GM12878 (cell line): ENCODE measurements at regions of chr7 and their contacts with region 1.

Region 1: DNA sequence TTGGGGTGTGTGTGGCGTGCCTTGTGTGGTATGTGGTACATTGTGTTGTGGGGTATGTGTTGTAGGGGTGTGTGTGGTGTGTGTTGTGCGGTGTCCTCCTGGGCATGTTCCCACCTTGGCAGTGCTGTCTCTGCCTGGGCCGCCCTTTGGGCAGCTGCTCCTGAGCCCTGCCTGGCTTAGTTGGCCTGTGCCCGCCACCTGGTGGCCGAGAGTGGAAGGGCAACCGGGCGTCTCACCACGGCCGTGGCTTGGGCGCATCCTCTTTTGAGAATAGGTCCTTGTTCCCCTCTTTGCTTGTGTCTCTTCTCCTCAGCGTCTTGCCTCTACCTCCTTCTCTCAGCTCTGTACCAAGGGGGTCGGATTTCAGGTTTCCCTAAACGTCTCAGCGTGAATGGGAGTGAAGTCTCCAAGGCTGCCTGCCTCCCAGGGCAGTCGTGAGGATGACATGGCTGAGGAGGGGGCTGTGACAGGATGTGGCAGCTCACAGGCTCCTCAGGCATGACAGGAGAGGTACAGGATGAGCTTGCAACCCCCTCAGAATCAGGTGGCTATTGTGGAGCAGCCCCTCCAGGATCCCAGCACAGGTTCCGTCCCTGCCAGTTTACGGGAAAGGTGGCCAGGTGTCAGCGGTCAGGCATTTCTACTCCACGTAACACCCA is 98.4 kb upstream of the PODXL start:
- DNase-seq: peak; percentile 4
- ATAC-seq: peak; percentile 100
- H3K4me3 ChIP-seq: no peak overlapping the region
- H3K27ac ChIP-seq: no peak overlapping the region
- H3K4me1 ChIP-seq: no peaks in the 10 kb centered on the region
- H3K27me3 ChIP-seq: no peaks in the 10 kb centered on the region
- CTCF ChIP-seq: peak; percentile 84 to 96 (median 96)
- EP300 ChIP-seq: no peak
- POLR2A ChIP-seq: no peak
- RAD21 ChIP-seq: peak; percentile 92

Region 2: DNA sequence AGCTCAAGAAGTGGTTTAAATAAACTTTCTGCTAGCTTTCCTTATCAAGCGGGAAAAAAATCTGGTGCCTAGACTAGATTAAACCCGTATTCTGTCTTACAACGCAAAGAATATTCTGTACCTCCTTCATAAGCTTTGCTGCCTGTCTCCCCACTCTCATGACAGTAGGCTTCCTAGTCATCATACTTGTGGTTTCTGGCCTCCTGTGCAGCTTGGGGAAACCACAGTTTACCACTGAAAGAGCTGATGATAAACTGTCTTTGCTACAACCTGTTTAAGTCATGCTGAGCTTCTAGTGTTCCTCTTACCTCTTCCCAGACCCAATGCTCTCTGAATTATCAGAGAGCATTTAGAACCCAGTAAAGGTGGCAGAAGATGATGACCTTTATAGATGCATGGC is 153.4 kb before region 1 on chr7:
- CTCF ChIA-PET with region 1: interaction called, 11 read pairs
- POLR2A ChIA-PET with region 1: no interaction called
- RAD21 ChIA-PET with region 1: no interaction called
- SMC1A ChIA-PET with region 1: interaction called, 3 read pairs
- in situ Hi-C with region 1: no loop called
- intact Hi-C with region 1: no loop called
- DNase-seq: no peak
- ATAC-seq: peak; percentile 81
- H3K4me3 ChIP-seq: no peak overlapping the region
- H3K27ac ChIP-seq: no peak overlapping the region
- H3K4me1 ChIP-seq: peaks cover 6% of the 10 kb centered on the region; the same call in 1 of the 2 replicates
- H3K27me3 ChIP-seq: no peaks in the 10 kb centered on the region
- CTCF ChIP-seq: no peak
- EP300 ChIP-seq: no peak
- POLR2A ChIP-seq: no peak
- RAD21 ChIP-seq: no peak

Region 3: GRCh38 chr7:131507592-131508331 is 147.0 kb before region 1 on chr7:
- CTCF ChIA-PET with region 1: interaction called, 21 read pairs
- POLR2A ChIA-PET with region 1: no interaction called
- RAD21 ChIA-PET with region 1: interaction called, 8 read pairs
- SMC1A ChIA-PET with region 1: interaction called, 5 read pairs
- in situ Hi-C with region 1: loop called (anchors 5 kb)
- intact Hi-C with region 1: loop called (anchors 1 kb)
- DNase-seq: no peak
- ATAC-seq: peak; percentile 96
- H3K4me3 ChIP-seq: no peak overlapping the region
- H3K27ac ChIP-seq: no peak overlapping the region
- H3K4me1 ChIP-seq: no peaks in the 10 kb centered on the region
- H3K27me3 ChIP-seq: no peaks in the 10 kb centered on the region
- CTCF ChIP-seq: peak; percentile 91 to 95 (median 95)
- EP300 ChIP-seq: no peak
- POLR2A ChIP-seq: no peak
- RAD21 ChIP-seq: peak; percentile 66

Region 4: GRCh38 chr7:131513245-131514061 is 141.3 kb before region 1 on chr7:
- CTCF ChIA-PET with region 1: interaction called, 21 read pairs
- POLR2A ChIA-PET with region 1: no interaction called
- RAD21 ChIA-PET with region 1: interaction called, 8 read pairs
- SMC1A ChIA-PET with region 1: interaction called, 6 read pairs
- in situ Hi-C with region 1: loop called (anchors 5 kb)
- intact Hi-C with region 1: loop called (anchors 1 kb)
- DNase-seq: no peak
- ATAC-seq: peak; percentile 100
- H3K4me3 ChIP-seq: no peak overlapping the region
- H3K27ac ChIP-seq: no peak overlapping the region
- H3K4me1 ChIP-seq: no peaks in the 10 kb centered on the region
- H3K27me3 ChIP-seq: no peaks in the 10 kb centered on the region
- CTCF ChIP-seq: peak; percentile 93 to 97 (median 97); a peak in 5 of 6 replicates
- EP300 ChIP-seq: no peak
- POLR2A ChIP-seq: no peak
- RAD21 ChIP-seq: peak; percentile 72

Region 5: DNA sequence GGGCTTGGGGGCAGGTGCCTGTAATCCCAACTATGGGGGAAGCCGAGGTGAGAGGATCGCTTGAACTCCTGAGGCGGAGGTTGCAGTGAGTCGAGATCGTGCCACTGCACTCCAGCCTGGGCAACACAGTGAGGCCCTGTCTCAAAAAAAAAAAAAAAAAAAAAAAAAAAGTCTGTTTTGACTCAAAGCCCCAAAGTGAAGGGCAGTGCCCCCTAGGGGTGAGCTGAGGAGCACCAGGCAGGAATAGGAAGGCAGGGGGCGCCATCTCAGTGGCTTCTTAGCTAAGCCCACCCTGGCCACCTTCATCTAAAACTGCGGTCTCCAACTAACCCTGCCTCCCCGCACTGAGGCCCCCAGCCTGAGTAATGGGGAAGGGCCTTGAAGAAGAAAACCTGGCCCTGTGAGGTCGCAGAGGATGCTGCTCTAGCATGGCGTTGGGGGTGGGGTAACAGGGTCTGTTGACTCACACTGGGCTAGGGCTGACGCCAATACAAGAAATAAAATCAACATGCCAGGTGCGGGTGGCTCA is 108.2 kb before region 1 on chr7:
- CTCF ChIA-PET with region 1: interaction called, 22 read pairs
- POLR2A ChIA-PET with region 1: no interaction called
- RAD21 ChIA-PET with region 1: interaction called, 4 read pairs
- SMC1A ChIA-PET with region 1: interaction called, 5 read pairs
- in situ Hi-C with region 1: no loop called
- intact Hi-C with region 1: loop called (anchors 10 kb)
- DNase-seq: no peak
- ATAC-seq: peak; percentile 68
- H3K4me3 ChIP-seq: no peak overlapping the region
- H3K27ac ChIP-seq: no peak overlapping the region
- H3K4me1 ChIP-seq: peaks cover 2% of the 10 kb centered on the region; the same call in 1 of the 2 replicates
- H3K27me3 ChIP-seq: no peaks in the 10 kb centered on the region
- CTCF ChIP-seq: peak; percentile 59 to 87 (median 75)
- EP300 ChIP-seq: no peak
- POLR2A ChIP-seq: no peak
- RAD21 ChIP-seq: peak; percentile 32; the same call in 1 of the 2 replicates